PC-3 (cell line): ENCODE measurements at regions of chr2 and their contacts with region 1.

Region 1: GRCh38 chr2:46942139-46942517 is 26.5 kb upstream of the MCFD2 start:
- DNase-seq: peak; percentile 35
- ATAC-seq: peak; percentile 14
- H3K4me3 ChIP-seq: peak overlapping the region; percentile 99
- H3K27ac ChIP-seq: peak overlapping the region; percentile 39; the same call in 1 of the 2 replicates
- H3K4me1 ChIP-seq: peaks cover 9% of the 10 kb centered on the region
- H3K27me3 ChIP-seq: no peaks in the 10 kb centered on the region
- CTCF ChIP-seq: no peak

Region 2: GRCh38 chr2:45922571-45922988 is 1019.5 kb before region 1 on chr2:
- CTCF ChIA-PET with region 1: no interaction called
- POLR2A ChIA-PET with region 1: no interaction called
- intact Hi-C with region 1: no loop called
- DNase-seq: peak; percentile 48
- ATAC-seq: peak; percentile 57
- H3K4me3 ChIP-seq: no peak overlapping the region
- H3K27ac ChIP-seq: no peak overlapping the region
- H3K4me1 ChIP-seq: peaks cover 18% of the 10 kb centered on the region
- H3K27me3 ChIP-seq: no peaks in the 10 kb centered on the region
- CTCF ChIP-seq: no peak

Region 3: DNA sequence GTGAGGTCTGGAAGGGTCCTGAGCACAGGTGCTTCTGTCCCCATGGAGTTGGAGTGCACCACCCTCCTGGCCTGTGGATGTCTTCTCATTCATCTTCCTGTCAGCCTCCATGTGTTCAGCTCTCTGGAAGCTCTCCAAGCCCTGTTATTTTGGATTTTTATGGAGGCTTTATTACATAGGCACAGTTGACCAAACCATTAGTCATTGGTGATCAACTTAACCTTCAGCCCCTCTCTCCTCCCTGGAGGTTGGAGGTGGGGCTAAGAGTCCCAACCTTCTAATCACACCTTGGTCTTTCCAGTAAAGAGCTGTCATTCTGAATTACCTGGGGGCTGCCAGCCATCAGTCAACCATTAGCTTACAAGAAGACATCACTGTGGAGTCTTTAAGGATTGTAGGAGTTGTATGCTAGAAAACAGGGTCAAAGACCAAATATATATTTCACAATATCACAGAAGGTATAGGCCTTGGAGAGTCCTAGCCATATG is 19.0 kb before region 1 on chr2:
- CTCF ChIA-PET with region 1: no interaction called
- POLR2A ChIA-PET with region 1: no interaction called
- intact Hi-C with region 1: loop called (anchors 2 kb)
- DNase-seq: peak; percentile 96
- ATAC-seq: peak; percentile 72
- H3K4me3 ChIP-seq: no peak overlapping the region
- H3K27ac ChIP-seq: peak overlapping the region; percentile 79
- H3K4me1 ChIP-seq: peaks cover 39% of the 10 kb centered on the region
- H3K27me3 ChIP-seq: no peaks in the 10 kb centered on the region
- CTCF ChIP-seq: no peak

Region 4: DNA sequence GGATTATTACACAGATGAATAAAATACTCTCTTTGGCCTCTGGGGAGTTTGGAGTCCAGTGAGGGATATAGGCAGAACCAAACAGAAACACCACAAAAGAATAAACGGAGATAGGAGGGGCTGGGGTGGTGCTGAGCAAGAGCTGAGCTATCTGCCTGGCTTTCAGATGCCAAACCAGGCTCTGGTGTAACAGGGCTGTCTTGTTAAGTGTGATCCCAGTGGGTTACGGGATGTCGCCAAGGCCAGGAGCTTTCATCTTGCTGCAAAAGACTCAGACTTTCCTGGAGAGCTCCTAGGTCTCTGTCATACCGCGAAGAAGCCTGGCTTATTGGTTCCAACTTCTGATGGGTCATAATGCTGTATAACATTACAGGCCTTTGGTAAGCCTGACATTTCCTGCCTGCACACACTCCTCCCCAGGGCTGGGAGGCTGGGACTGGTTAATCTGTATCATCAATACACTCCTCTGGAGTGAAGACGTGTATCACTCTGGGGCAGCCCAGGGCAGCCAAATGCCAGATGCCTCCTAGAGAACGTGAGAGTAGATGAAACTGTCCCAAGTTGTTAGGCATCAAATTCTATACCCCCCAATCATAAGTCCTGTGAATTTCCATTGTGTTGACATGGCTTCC is 152.5 kb after region 1 on chr2:
- CTCF ChIA-PET with region 1: no interaction called
- POLR2A ChIA-PET with region 1: no interaction called
- intact Hi-C with region 1: no loop called
- DNase-seq: no peak
- ATAC-seq: no peak
- H3K4me3 ChIP-seq: no peak overlapping the region
- H3K27ac ChIP-seq: no peak overlapping the region
- H3K4me1 ChIP-seq: peaks cover 12% of the 10 kb centered on the region
- H3K27me3 ChIP-seq: no peaks in the 10 kb centered on the region
- CTCF ChIP-seq: no peak